ENCODE measurements at regions of chr9 and their contacts with region 1.

Region 1: GRCh38 chr9:127199001-127199791 is 65.4 kb upstream of the GARNL3 start:
- DNase-seq: peak; percentile 71
- ATAC-seq: peak; percentile 93
- H3K4me3 ChIP-seq: no peak overlapping the region
- H3K27ac ChIP-seq: no peak overlapping the region
- H3K4me1 ChIP-seq: peaks cover 6% of the 10 kb centered on the region
- H3K27me3 ChIP-seq: no peaks in the 10 kb centered on the region
- CTCF ChIP-seq: peak; percentile 92 to 98 (median 96)
- EP300 ChIP-seq: no peak
- POLR2A ChIP-seq: no peak
- RAD21 ChIP-seq: peak; percentile 100

Region 2: GRCh38 chr9:126939821-126940221 is 259.4 kb before region 1 on chr9:
- CTCF ChIA-PET with region 1: interaction called, 172 read pairs
- POLR2A ChIA-PET with region 1: interaction called, 10 read pairs
- RAD21 ChIA-PET with region 1: interaction called, 91 read pairs
- SMC1A ChIA-PET with region 1: interaction called, 83 read pairs
- in situ Hi-C with region 1: loop called (anchors 5 kb)
- intact Hi-C with region 1: loop called (anchors 1 kb)
- DNase-seq: no peak
- ATAC-seq: no peak
- H3K4me3 ChIP-seq: no peak overlapping the region
- H3K27ac ChIP-seq: no peak overlapping the region
- H3K4me1 ChIP-seq: no peaks in the 10 kb centered on the region
- H3K27me3 ChIP-seq: no peaks in the 10 kb centered on the region
- CTCF ChIP-seq: no peak
- EP300 ChIP-seq: no peak
- POLR2A ChIP-seq: no peak
- RAD21 ChIP-seq: no peak

Region 3: GRCh38 chr9:126957687-126958053 is 241.5 kb before region 1 on chr9:
- CTCF ChIA-PET with region 1: interaction called, 174 read pairs
- POLR2A ChIA-PET with region 1: no interaction called
- RAD21 ChIA-PET with region 1: interaction called, 63 read pairs
- SMC1A ChIA-PET with region 1: interaction called, 124 read pairs
- in situ Hi-C with region 1: no loop called
- intact Hi-C with region 1: no loop called
- DNase-seq: no peak
- ATAC-seq: no peak
- H3K4me3 ChIP-seq: no peak overlapping the region
- H3K27ac ChIP-seq: no peak overlapping the region
- H3K4me1 ChIP-seq: no peaks in the 10 kb centered on the region
- H3K27me3 ChIP-seq: no peaks in the 10 kb centered on the region
- CTCF ChIP-seq: no peak
- EP300 ChIP-seq: no peak
- POLR2A ChIP-seq: no peak
- RAD21 ChIP-seq: no peak

Region 4: DNA sequence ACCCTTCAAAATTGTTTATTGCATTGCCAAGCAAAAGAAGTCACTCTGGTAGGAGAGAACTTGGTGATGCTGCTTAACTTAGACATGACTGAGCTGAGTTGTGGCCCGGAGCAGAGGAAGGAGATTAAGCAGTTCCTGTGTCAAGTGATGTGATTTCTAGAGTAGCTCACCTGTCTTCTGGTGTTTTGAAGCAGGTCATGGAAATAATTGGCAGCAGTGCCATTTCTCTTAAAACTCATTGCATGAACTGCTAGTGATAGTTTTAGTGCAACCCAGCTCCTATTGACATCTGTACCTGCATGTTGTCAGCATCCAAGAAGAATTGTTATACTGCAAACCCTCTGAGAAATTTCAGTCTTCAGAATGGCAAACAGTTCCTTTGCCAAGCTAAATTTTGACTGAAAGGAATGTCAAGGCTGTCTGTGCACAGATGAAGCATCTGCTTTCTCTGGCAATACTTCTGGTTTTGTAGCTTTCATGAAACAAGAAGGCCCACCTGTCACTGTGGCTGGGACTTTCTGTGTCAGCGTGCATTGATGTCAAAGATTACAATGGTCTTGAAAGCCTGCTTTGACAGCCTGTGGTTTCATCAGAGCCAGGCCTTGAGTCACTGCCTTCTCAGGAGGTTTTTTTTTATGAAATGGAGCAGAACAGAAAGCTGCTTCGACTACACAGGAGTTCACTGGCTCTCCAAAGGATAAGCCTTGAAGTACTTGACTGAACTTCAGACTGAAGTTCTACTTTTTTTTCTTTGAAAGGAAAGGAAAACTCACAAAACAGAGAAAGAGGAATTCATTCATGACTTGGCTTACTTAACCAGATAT is 194.0 kb before region 1 on chr9:
- CTCF ChIA-PET with region 1: interaction called, 5 read pairs
- POLR2A ChIA-PET with region 1: interaction called, 4 read pairs
- RAD21 ChIA-PET with region 1: interaction called, 19 read pairs
- SMC1A ChIA-PET with region 1: interaction called, 6 read pairs
- in situ Hi-C with region 1: no loop called
- intact Hi-C with region 1: loop called (anchors 2 kb)
- DNase-seq: peak; percentile 98
- ATAC-seq: peak; percentile 85
- H3K4me3 ChIP-seq: peak overlapping the region; percentile 4; the same call in 1 of the 2 replicates
- H3K27ac ChIP-seq: peak overlapping the region; percentile 77
- H3K4me1 ChIP-seq: peaks cover 54% of the 10 kb centered on the region
- H3K27me3 ChIP-seq: no peaks in the 10 kb centered on the region
- CTCF ChIP-seq: no peak
- EP300 ChIP-seq: peak; percentile 99
- POLR2A ChIP-seq: no peak
- RAD21 ChIP-seq: peak; percentile 32

Region 5: DNA sequence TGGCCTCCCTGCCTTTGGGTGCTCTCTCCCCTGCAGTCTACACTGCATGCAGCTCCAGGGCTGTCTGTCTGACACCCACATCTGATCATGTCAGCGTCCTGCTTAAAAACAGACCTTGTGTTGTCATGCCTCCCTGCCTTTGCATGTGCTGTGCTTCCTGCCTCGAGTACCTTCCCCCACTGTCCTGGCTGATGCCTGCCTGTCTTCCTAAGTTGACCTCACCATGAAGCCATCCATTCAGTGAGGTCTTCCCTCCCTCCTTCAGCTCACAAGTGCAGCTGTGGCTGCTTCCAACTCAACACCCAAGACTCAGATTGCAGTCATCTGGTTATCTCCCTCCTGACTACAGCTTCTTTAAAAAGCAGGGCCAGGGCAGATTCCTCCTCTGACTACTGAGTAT is 82.2 kb before region 1 on chr9:
- CTCF ChIA-PET with region 1: interaction called, 6 read pairs
- POLR2A ChIA-PET with region 1: no interaction called
- RAD21 ChIA-PET with region 1: no interaction called
- SMC1A ChIA-PET with region 1: interaction called, 12 read pairs
- in situ Hi-C with region 1: no loop called
- intact Hi-C with region 1: loop called (anchors 5 kb)
- DNase-seq: no peak
- ATAC-seq: peak; percentile 50
- H3K4me3 ChIP-seq: no peak overlapping the region
- H3K27ac ChIP-seq: no peak overlapping the region
- H3K4me1 ChIP-seq: peaks cover 21% of the 10 kb centered on the region
- H3K27me3 ChIP-seq: no peaks in the 10 kb centered on the region
- CTCF ChIP-seq: no peak
- EP300 ChIP-seq: no peak
- POLR2A ChIP-seq: no peak
- RAD21 ChIP-seq: 0 out of 2 replicates have a peak, but pooled peaks have one; percentile 0

Region 6: DNA sequence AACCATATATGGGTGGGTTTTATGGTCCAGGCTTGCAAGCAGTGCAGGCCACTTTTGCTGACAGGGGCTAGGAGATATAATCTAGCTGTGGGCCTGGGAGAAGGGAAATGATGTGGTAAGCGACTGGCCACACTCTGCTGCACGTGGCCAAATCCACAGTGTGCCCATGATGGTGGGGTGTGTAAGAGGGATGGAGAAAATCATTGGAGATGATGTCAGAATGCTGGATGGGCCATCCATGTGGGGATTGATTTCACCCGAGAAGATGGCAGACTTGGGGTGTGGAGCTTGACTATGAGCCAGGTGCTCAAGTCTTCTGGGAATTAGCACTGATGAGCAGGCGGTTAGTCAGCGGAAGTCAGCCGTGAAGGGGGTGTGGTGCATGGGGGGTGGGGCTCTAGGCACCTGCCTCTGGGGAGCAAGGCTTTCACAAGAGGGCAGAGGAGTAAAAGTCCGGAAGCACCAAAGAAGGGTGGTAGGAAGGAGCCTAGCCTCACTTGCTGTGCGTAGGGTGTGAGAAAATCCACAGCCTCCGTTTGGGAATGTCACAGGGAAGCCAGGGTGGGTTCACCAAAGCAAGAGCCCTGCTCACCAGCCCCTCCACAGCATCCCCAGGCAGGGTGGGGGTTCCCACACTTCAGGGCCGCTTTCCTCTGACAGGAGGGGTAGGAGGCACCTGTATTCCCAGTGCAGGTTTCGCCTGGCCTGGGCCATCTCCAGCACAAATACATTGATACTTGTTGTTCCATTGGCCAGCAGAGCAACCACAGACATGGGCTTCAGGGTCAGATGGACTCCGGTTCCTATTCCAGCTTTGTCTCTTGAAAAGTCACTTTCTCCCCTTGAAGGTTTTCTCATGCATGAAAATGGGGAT is 32.3 kb before region 1 on chr9:
- CTCF ChIA-PET with region 1: interaction called, 84 read pairs
- POLR2A ChIA-PET with region 1: interaction called, 29 read pairs
- RAD21 ChIA-PET with region 1: interaction called, 226 read pairs
- SMC1A ChIA-PET with region 1: interaction called, 812 read pairs
- in situ Hi-C with region 1: no loop called
- intact Hi-C with region 1: loop called (anchors 1 kb)
- DNase-seq: peak; percentile 94
- ATAC-seq: peak; percentile 84
- H3K4me3 ChIP-seq: no peak overlapping the region
- H3K27ac ChIP-seq: peak overlapping the region; percentile 79
- H3K4me1 ChIP-seq: peaks cover 36% of the 10 kb centered on the region
- H3K27me3 ChIP-seq: no peaks in the 10 kb centered on the region
- CTCF ChIP-seq: no peak
- EP300 ChIP-seq: peak; percentile 81 to 94
- POLR2A ChIP-seq: peak; percentile 63
- RAD21 ChIP-seq: no peak

Region 7: GRCh38 chr9:127178686-127179632 is 20.2 kb before region 1 on chr9:
- CTCF ChIA-PET with region 1: interaction called, 38 read pairs
- POLR2A ChIA-PET with region 1: interaction called, 38 read pairs
- RAD21 ChIA-PET with region 1: interaction called, 226 read pairs
- SMC1A ChIA-PET with region 1: interaction called, 812 read pairs
- in situ Hi-C with region 1: no loop called
- intact Hi-C with region 1: loop called (anchors 1 kb)
- DNase-seq: no peak
- ATAC-seq: no peak
- H3K4me3 ChIP-seq: no peak overlapping the region
- H3K27ac ChIP-seq: no peak overlapping the region
- H3K4me1 ChIP-seq: peaks cover 18% of the 10 kb centered on the region
- H3K27me3 ChIP-seq: no peaks in the 10 kb centered on the region
- CTCF ChIP-seq: no peak
- EP300 ChIP-seq: no peak
- POLR2A ChIP-seq: no peak
- RAD21 ChIP-seq: no peak